Activated CD8-positive, alpha-beta T cell treated with anti-CD3 and anti-CD28 coated beads for 36 hours (primary cell): ENCODE measurements at regions of chr4 and their contacts with region 1.

Region 1: GRCh38 chr4:147696863-147697262 is 12.9 kb upstream of the PRMT9 start:
- DNase-seq: no peak
- ATAC-seq: no peak
- H3K4me3 Mint-ChIP-seq: no peak overlapping the region
- H3K27ac Mint-ChIP-seq: no peak overlapping the region
- H3K4me1 Mint-ChIP-seq: no peaks in the 10 kb centered on the region
- H3K27me3 Mint-ChIP-seq: peaks cover 6% of the 10 kb centered on the region
- CTCF ChIP-seq: no peak

Region 2: DNA sequence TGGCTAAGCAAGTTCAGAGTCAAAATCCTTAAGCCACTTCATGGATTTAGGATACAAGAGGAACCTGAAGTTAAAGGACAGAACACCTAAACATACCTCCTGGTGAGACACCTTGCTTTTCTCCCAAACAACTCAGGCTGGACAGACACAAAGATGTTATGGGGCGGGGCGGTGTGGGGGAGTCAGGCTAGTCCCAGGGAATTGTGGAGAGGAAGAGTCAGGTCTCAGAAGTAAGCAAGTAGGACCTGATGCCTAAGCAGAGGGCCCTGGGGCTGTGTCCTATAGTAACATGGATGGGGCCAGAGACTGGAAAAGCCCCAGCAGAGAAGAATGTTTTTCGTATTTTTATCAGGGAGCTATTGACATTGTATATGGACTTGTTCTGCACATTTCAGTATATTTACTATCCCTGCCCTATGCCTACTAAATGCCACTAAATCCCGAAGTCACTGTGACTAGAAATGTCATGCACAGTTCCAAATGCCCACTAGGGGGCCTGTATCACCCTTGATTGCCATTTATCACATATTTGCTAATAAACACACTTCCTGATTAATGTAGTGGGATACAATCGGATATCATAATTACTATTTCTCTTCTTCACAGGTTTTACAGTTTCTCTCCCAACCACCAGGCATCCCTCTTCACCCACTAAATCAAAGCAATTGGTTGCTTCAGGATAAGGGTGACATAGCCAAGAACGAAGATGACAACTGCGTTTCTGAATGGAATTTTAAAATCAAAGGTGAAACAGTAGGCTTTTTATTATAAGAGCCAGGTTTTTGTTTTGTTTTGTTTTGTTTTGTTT is 11.2 kb after region 1 on chr4:
- CTCF ChIA-PET with region 1: interaction called, 18 read pairs
- POLR2A ChIA-PET with region 1: no interaction called
- intact Hi-C with region 1: no loop called
- DNase-seq: peak; percentile 72
- ATAC-seq: peak; percentile 77
- H3K4me3 Mint-ChIP-seq: no peak overlapping the region
- H3K27ac Mint-ChIP-seq: no peak overlapping the region
- H3K4me1 Mint-ChIP-seq: peaks cover 3% of the 10 kb centered on the region
- H3K27me3 Mint-ChIP-seq: peaks cover 1% of the 10 kb centered on the region
- CTCF ChIP-seq: peak; percentile 96